Activated CD8-positive, alpha-beta memory T cell treated with anti-CD3 and anti-CD28 coated beads, Interleukin-2, amount 10 ng/mL, durations not matched to agents 7 days and 5 days (primary cell): ENCODE measurements at regions of chr1 and their contacts with region 1.

Region 1: GRCh38 chr1:150259758-150260669 is 2.4 kb downstream of the CA14 start:
- DNase-seq: no peak
- ATAC-seq: no peak
- H3K4me3 Mint-ChIP-seq: no peak overlapping the region
- H3K27ac Mint-ChIP-seq: no peak overlapping the region
- H3K4me1 Mint-ChIP-seq: peaks cover 20% of the 10 kb centered on the region
- H3K27me3 Mint-ChIP-seq: peaks cover 40% of the 10 kb centered on the region

Region 2: GRCh38 chr1:150293433-150294168 is 33.6 kb after region 1 on chr1 and contains the start of gene MRPS21:
- CTCF ChIA-PET with region 1: interaction called, 11 read pairs
- DNase-seq: peak; percentile 94
- ATAC-seq: peak; percentile 99
- H3K4me3 Mint-ChIP-seq: peak within 1 kb of the TSS; percentile 96
- H3K27ac Mint-ChIP-seq: peak within 1 kb of the TSS; percentile 90
- H3K4me1 Mint-ChIP-seq: peaks cover 41% of the 10 kb centered on the region
- H3K27me3 Mint-ChIP-seq: no peaks in the 10 kb centered on the region
- total RNA-seq, gene MRPS21: 70.9 to 82.8 TPM

Region 3: DNA sequence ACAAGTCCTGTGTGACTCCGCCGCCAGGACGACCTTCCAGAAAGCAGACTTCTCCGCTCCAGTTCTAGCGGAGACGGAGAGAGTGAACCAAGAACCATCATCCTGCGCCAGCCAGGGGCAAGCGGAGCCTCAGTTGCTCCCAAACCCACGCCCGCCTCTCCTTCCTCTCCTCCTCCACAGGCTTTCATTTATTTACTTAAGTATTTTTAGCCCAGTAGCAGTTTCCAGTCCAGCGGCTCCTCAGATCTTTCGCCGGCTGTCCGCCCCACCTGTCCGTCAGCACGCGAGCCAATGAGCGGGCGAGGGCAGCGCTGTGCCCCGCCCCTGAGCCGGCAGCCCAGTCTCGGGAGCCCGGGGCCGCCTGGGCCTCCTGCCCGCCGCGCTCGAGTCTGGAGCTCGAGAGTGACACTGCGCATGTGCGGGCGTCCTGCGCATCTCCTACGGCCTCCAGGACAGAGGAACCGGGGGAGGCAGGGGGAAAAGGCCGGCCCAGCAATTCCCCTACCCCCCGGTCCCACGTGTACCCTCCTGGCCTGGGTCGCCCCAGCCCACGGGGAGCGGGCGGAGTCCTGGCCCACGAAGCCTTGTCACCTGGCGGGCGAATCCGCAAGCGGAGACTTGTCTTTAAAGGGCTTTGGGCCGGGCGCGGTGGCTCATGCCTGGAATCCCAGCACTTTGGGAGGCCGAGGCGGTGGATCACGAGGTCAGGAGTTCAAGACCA is 255.5 kb after region 1 on chr1 and contains the start of gene FALEC:
- CTCF ChIA-PET with region 1: interaction called, 28 read pairs
- DNase-seq: peak; percentile 94
- ATAC-seq: peak; percentile 100
- H3K4me3 Mint-ChIP-seq: peak within 1 kb of the TSS; percentile 84
- H3K27ac Mint-ChIP-seq: peak within 1 kb of the TSS; percentile 64
- H3K4me1 Mint-ChIP-seq: peaks cover 17% of the 10 kb centered on the region
- H3K27me3 Mint-ChIP-seq: no peaks in the 10 kb centered on the region
- total RNA-seq, gene FALEC: 0.59 TPM in 1 of 2 experiments, not detected in the other

Region 4: GRCh38 chr1:150561974-150562445 is 302.0 kb after region 1 on chr1:
- CTCF ChIA-PET with region 1: interaction called, 17 read pairs
- DNase-seq: peak; percentile 96
- ATAC-seq: peak; percentile 65
- H3K4me3 Mint-ChIP-seq: peak overlapping the region; percentile 87
- H3K27ac Mint-ChIP-seq: peak overlapping the region; percentile 100
- H3K4me1 Mint-ChIP-seq: peaks cover 56% of the 10 kb centered on the region
- H3K27me3 Mint-ChIP-seq: no peaks in the 10 kb centered on the region